H1 (cell line): ENCODE measurements at regions of chr3 and their contacts with region 1.

Region 1: DNA sequence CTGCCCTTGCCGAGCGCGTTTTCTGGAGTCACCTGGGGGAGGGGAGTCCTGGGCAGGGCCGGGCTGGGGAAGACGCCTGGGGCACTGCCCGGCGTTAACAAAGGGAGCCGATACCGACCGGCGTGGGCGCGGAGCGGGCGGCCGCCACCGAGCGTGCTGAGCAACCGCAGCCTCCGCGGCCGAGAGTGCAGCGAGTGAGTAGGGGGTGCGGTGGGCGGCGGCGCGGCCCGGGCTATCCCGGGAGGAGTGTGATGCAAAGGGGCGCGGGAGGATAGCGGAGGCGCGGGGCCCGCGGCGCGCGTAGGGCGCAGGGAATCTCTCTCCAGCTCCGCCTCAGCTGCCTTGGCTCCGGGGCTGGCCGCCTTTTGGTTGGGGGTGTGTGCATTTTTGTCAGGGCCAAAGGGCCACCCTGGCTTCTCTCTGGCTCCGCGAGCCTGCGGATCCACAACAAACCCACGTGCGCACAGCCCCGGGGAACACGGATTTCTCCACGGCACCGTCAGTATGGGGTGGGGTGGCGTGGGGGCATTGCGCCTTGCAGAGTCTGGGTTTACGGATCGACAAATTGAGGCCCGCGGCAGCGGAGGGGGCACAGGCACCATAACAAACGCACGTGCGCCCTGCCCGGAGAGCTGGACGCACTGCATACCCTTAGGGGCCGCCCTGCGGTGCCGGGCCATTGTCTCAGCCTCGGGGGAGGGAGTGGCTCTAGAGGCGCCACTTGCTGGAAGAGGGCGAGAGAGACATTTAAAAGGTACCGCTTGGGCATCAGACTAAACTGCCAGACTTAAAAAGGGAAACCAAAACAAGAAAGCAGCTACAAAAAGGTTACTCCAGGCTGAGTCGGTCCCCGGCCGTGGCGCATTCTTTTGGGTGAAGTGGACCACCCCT is 560 bp downstream of the ST6GAL1 start:
- DNase-seq: peak; percentile 79 to 82
- H3K4me3 ChIP-seq: peak overlapping the region; percentile 76 to 89 (median 80)
- H3K27ac ChIP-seq: peak overlapping the region; percentile 84
- H3K4me1 ChIP-seq: peaks cover 10 to 17% (median 14%) of the 10 kb centered on the region in 4 experiments; a peak in 6 of 7 replicates
- H3K27me3 ChIP-seq: peaks cover 0 to 6% (median 0%) of the 10 kb centered on the region in 4 experiments; a peak in 2 of 7 replicates
- CTCF ChIP-seq: peak in 2 of 3 experiments; percentile 18 to 20; a peak in 3 of 4 replicates
- EP300 ChIP-seq: no peak
- POLR2A ChIP-seq: no peak; a peak in 1 of 3 replicates
- RAD21 ChIP-seq: peak; percentile 11 to 23; a peak in 2 of 4 replicates

Region 2: GRCh38 chr3:186909078-186909853 is 21.6 kb before region 1 on chr3:
- CTCF ChIA-PET with region 1: interaction called, 4 read pairs
- POLR2A ChIA-PET with region 1: interaction called, 17 read pairs
- DNase-seq: no peak
- H3K4me3 ChIP-seq: no peak overlapping the region
- H3K27ac ChIP-seq: peak overlapping the region; percentile 36; the same call in 1 of the 2 replicates
- H3K4me1 ChIP-seq: peaks cover 0 to 9% (median 0%) of the 10 kb centered on the region in 4 experiments; a peak in 4 of 7 replicates
- H3K27me3 ChIP-seq: no peaks in the 10 kb centered on the region
- CTCF ChIP-seq: no peak
- EP300 ChIP-seq: no peak
- POLR2A ChIP-seq: no peak
- RAD21 ChIP-seq: no peak

Region 3: DNA sequence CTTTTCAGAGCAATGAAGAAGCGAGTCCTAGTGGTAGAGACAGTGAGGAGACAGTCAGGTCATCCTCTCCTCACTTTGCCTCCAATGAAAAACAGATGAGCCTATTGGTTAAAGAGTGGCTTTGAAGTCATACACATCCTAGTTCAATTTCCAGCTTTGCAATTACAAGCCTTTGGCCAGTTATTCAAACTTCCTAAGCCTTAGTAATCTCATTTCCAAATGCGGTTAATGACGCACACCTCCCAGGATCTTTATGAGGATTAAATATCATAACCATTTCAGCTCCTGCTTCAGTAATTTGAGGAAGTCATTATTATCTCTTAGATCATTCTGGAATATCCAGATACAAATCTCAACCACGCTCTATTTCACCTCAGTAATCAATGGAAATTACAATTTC is 10.6 kb before region 1 on chr3:
- CTCF ChIA-PET with region 1: interaction called, 14 read pairs
- POLR2A ChIA-PET with region 1: interaction called, 5 read pairs
- DNase-seq: no peak
- H3K4me3 ChIP-seq: no peak overlapping the region
- H3K27ac ChIP-seq: no peak overlapping the region
- H3K4me1 ChIP-seq: no peaks in the 10 kb centered on the region
- H3K27me3 ChIP-seq: no peaks in the 10 kb centered on the region
- CTCF ChIP-seq: no peak
- EP300 ChIP-seq: no peak
- POLR2A ChIP-seq: no peak
- RAD21 ChIP-seq: no peak

Region 4: GRCh38 chr3:186946756-186947375 is 16.0 kb after region 1 on chr3:
- CTCF ChIA-PET with region 1: interaction called, 8 read pairs
- POLR2A ChIA-PET with region 1: interaction called, 14 read pairs
- DNase-seq: no peak
- H3K4me3 ChIP-seq: no peak overlapping the region
- H3K27ac ChIP-seq: no peak overlapping the region
- H3K4me1 ChIP-seq: peaks cover 0 to 2% (median 2%) of the 10 kb centered on the region in 4 experiments; a peak in 3 of 7 replicates
- H3K27me3 ChIP-seq: no peaks in the 10 kb centered on the region
- CTCF ChIP-seq: no peak
- EP300 ChIP-seq: no peak
- POLR2A ChIP-seq: no peak
- RAD21 ChIP-seq: no peak

Region 5: GRCh38 chr3:186965141-186965879 is 34.4 kb after region 1 on chr3:
- CTCF ChIA-PET with region 1: interaction called, 10 read pairs
- POLR2A ChIA-PET with region 1: interaction called, 3 read pairs
- DNase-seq: no peak
- H3K4me3 ChIP-seq: peak overlapping the region in 2 of 4 experiments; percentile 7 to 18; a peak in 3 of 8 replicates
- H3K27ac ChIP-seq: peak overlapping the region; percentile 64
- H3K4me1 ChIP-seq: peaks cover 20 to 36% (median 28%) of the 10 kb centered on the region in 4 experiments
- H3K27me3 ChIP-seq: no peaks in the 10 kb centered on the region
- CTCF ChIP-seq: no peak
- EP300 ChIP-seq: no peak
- POLR2A ChIP-seq: no peak
- RAD21 ChIP-seq: no peak

Region 6: GRCh38 chr3:187507268-187507667 is 576.4 kb after region 1 on chr3:
- CTCF ChIA-PET with region 1: no interaction called
- POLR2A ChIA-PET with region 1: no interaction called
- DNase-seq: no peak
- H3K4me3 ChIP-seq: no peak overlapping the region
- H3K27ac ChIP-seq: no peak overlapping the region
- H3K4me1 ChIP-seq: no peaks in the 10 kb centered on the region
- H3K27me3 ChIP-seq: no peaks in the 10 kb centered on the region
- CTCF ChIP-seq: no peak
- EP300 ChIP-seq: no peak
- POLR2A ChIP-seq: no peak
- RAD21 ChIP-seq: no peak